ENCODE measurements at regions of chr12 and their contacts with region 1.

Region 1: GRCh38 chr12:49130151-49131050 is 794 bp downstream of the TUBA1B start:
- DNase-seq: peak; percentile 84 to 96
- ATAC-seq: peak; percentile 74 to 80
- H3K4me3 ChIP-seq: peak overlapping the region; percentile 93
- H3K27ac ChIP-seq: peak overlapping the region; percentile 99
- H3K4me1 ChIP-seq: peaks cover 27% of the 10 kb centered on the region
- CTCF ChIP-seq: peak; percentile 90
- EP300 ChIP-seq: no peak
- POLR2A ChIP-seq: peak; percentile 44
- RAD21 ChIP-seq: peak; percentile 22 to 62

Region 2: GRCh38 chr12:49088190-49088931 is 42.0 kb before region 1 on chr12:
- CTCF ChIA-PET with region 1: interaction called, 161 read pairs
- POLR2A ChIA-PET with region 1: interaction called, 26 read pairs
- DNase-seq: peak; percentile 89 to 96
- ATAC-seq: peak; percentile 82 to 90
- H3K4me3 ChIP-seq: no peak overlapping the region
- H3K27ac ChIP-seq: peak overlapping the region in 1 of 2 experiments; percentile 64; a peak in 3 of 6 replicates
- H3K4me1 ChIP-seq: peaks cover 17% of the 10 kb centered on the region; the same call in 2 of the 3 replicates
- CTCF ChIP-seq: peak; percentile 92
- EP300 ChIP-seq: no peak
- POLR2A ChIP-seq: no peak
- RAD21 ChIP-seq: peak; percentile 69 to 74

Region 3: GRCh38 chr12:49146406-49146805 is 16.0 kb after region 1 on chr12:
- CTCF ChIA-PET with region 1: interaction called, 21 read pairs
- POLR2A ChIA-PET with region 1: interaction called, 13 read pairs
- DNase-seq: no peak
- ATAC-seq: no peak
- H3K4me3 ChIP-seq: no peak overlapping the region
- H3K27ac ChIP-seq: no peak overlapping the region
- H3K4me1 ChIP-seq: no peaks in the 10 kb centered on the region
- CTCF ChIP-seq: no peak
- EP300 ChIP-seq: no peak
- POLR2A ChIP-seq: no peak
- RAD21 ChIP-seq: no peak

Region 4: GRCh38 chr12:49200919-49201594 is 70.7 kb after region 1 on chr12:
- CTCF ChIA-PET with region 1: interaction called, 5 read pairs
- POLR2A ChIA-PET with region 1: interaction called, 16 read pairs
- DNase-seq: peak; percentile 71 to 84
- ATAC-seq: peak; percentile 81 to 91
- H3K4me3 ChIP-seq: 0 out of 3 replicates have a peak overlapping the region, but pooled peaks have one; percentile 1
- H3K27ac ChIP-seq: peak overlapping the region; percentile 57 to 72; a peak in 5 of 6 replicates
- H3K4me1 ChIP-seq: peaks cover 30% of the 10 kb centered on the region
- CTCF ChIP-seq: no peak
- EP300 ChIP-seq: no peak
- POLR2A ChIP-seq: no peak
- RAD21 ChIP-seq: no peak

Region 5: DNA sequence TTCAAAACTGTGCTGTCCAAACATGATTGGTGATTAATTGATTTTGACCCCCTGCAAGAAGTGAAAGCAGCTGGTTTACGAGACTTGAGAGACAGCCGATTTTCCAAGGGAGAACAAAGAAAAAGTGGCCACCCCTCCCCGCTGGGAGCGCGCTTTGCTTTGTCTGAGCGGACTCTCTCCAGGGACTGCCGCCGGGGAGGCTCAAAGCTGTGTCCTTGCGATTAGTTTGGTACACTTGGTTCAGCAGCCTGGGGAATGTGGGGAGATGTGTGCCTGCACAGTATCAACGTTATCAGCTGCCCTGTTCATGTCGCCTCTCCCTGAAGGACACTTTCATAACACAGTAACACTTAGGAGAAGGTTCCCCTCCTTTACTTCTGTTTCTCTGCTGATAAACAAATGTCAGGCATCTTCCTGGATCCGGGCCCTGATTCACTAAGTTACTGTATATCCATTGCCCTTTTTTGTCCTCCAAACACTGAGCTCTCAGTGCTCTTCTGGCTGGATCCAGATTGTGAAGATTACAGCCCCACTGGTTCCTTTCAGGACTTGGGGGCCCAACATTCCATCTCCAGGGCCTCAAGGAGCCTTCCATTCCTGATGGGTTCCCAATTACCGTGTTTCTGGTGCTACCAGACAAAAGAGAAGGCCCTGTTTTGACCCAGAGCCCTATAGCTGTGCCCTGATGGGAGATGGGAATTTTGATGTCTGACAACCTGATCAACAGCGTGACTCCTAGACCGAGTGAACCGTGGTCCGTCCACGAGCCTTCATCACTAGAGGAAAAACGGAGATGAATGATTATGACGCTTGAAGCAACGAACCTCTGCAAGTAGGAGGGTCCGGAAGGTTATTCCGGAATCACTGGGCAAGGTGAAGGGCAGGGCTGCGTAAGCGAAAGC is 102.8 kb after region 1 on chr12:
- CTCF ChIA-PET with region 1: interaction called, 56 read pairs
- POLR2A ChIA-PET with region 1: interaction called, 45 read pairs
- DNase-seq: no peak
- ATAC-seq: no peak
- H3K4me3 ChIP-seq: no peak overlapping the region
- H3K27ac ChIP-seq: peak overlapping the region in 1 of 2 experiments; percentile 92; a peak in 1 of 6 replicates
- H3K4me1 ChIP-seq: peaks cover 3% of the 10 kb centered on the region; the same call in 1 of the 3 replicates
- CTCF ChIP-seq: no peak
- EP300 ChIP-seq: no peak
- POLR2A ChIP-seq: no peak
- RAD21 ChIP-seq: no peak